Heart left ventricle (tissue), 16 donors: ENCODE measurements at regions of chr13 and their contacts with region 1.

Region 1: DNA sequence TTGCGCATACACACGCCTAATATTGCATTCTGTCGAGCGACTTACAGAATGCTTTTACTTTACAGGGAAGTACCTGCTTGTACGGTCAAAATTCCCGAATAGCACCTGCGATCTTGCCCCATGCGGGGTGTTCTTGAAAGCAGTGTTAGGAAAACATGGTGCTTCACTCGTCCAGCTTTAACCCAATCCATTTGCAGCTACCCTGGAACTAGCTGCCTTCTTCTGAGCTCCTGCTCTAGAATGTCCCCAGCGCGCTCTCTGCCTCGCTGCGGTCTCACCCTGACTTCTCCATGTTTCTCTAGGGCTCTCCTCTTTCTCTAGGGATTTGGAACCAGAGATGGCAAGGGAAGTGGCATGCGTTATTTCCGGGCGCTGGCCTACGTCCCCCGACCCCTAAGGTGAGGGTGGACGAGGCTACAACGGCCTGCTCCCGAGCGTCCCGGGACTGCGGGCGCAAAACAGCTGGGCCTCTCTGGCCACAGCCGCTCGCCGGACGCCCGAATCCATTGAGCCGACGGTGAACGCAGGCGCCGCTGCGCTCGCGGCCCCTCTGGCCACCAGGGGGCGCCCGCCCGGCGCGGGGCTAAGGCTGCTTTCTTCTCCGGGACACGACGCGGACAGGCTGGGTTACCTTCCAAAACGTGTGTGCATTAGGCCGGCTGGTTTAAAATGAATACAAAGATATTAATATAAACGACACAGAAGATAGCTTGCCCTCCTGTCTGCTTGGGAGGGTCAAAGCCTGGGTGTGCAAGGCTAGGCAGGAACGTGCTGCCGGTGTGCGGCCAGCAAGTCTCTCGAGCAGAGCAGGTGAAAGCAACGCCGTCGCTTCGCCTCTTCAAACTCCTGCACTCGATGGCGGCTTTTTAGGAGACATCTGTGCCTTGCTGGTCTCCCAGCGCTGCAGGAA is 1.8 kb upstream of the SPRY2 start:
- DNase-seq: peak; percentile 85 to 95 (median 90)
- ATAC-seq: peak; percentile 24 to 59 (median 51)
- H3K4me3 ChIP-seq: peak overlapping the region; percentile 69 to 97 (median 94)
- H3K27ac ChIP-seq: peak overlapping the region; percentile 89 to 100 (median 98)
- H3K4me1 ChIP-seq: peaks cover 0 to 30% (median 14%) of the 10 kb centered on the region in 12 donors
- H3K27me3 ChIP-seq: no peaks in the 10 kb centered on the region
- CTCF ChIP-seq: peak; percentile 96 to 100 (median 99)
- POLR2A ChIP-seq: peak in 1 of 2 donors; percentile 51

Region 2: GRCh38 chr13:79405829-79406596 is 936.7 kb before region 1 on chr13 and contains the start of gene RBM26:
- intact Hi-C with region 1: loop called in 1 of 10 experiments (anchors 5 kb)
- DNase-seq: peak; percentile 94 to 96 (median 95)
- ATAC-seq: peak; percentile 92 to 94 (median 94)
- H3K4me3 ChIP-seq: peak within 1 kb of the TSS; percentile 68 to 92 (median 84)
- H3K27ac ChIP-seq: peak within 1 kb of the TSS; percentile 90 to 98 (median 96)
- H3K4me1 ChIP-seq: peaks cover 3 to 53% (median 45%) of the 10 kb centered on the region in 12 donors
- H3K27me3 ChIP-seq: no peaks in the 10 kb centered on the region
- CTCF ChIP-seq: peak in 2 of 12 donors; percentile 7 to 18
- POLR2A ChIP-seq: peak in 1 of 2 donors; percentile 49
- total RNA-seq, gene RBM26: 16.9 to 28.4 (median 21.0) TPM

Region 3: GRCh38 chr13:79637133-79637763 is 705.5 kb before region 1 on chr13:
- intact Hi-C with region 1: loop called in 2 of 10 experiments (anchors 2 to 5 kb)
- DNase-seq: peak; percentile 75 to 88 (median 83)
- ATAC-seq: peak; percentile 96 to 98 (median 97)
- H3K4me3 ChIP-seq: peak overlapping the region in 10 of 12 donors; percentile 1 to 46 (median 35)
- H3K27ac ChIP-seq: peak overlapping the region; percentile 22 to 84 (median 64)
- H3K4me1 ChIP-seq: peaks cover 0 to 22% (median 2%) of the 10 kb centered on the region in 12 donors
- H3K27me3 ChIP-seq: no peaks in the 10 kb centered on the region
- CTCF ChIP-seq: no peak
- POLR2A ChIP-seq: no peak

Region 4: DNA sequence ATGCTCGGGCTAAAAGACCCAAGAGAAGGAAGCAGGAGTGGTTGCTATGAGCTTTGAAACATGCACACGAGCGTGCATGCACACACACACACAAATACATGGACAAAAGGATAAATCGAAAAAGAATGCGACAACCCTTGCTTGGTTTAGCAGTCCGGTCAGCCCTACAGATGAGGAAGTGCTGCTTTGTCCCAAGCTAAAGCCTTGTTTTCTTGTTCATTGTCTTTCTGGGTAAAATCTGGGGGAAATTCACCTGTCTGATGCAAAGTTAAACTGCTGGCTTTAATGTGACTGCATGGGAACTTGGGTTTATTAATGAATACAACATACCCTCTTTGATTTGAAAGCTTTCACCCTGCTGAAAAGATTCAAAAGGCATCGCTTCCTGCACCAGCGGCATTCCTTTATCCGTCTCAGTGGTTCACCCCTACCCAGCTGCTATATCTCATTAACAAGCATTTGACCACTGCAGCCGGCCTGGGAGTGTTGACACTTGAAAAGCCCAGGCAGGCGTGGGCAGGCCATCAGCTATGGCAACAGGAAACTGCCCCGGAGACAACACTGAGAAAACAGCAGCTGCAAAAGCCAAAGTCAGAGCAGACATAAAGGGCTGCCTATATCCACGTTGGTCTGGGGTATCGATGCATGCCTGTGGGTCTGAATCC is 560.1 kb before region 1 on chr13:
- intact Hi-C with region 1: loop called in 7 of 10 experiments (anchors 5 to 10 kb)
- DNase-seq: peak; percentile 62 to 88 (median 73)
- ATAC-seq: peak; percentile 96 to 99 (median 98)
- H3K4me3 ChIP-seq: peak overlapping the region in 2 of 12 donors; percentile 12 to 15
- H3K27ac ChIP-seq: peak overlapping the region in 7 of 12 donors; percentile 9 to 47 (median 25)
- H3K4me1 ChIP-seq: peaks cover 0 to 29% (median 9%) of the 10 kb centered on the region in 12 donors
- H3K27me3 ChIP-seq: no peaks in the 10 kb centered on the region
- CTCF ChIP-seq: no peak
- POLR2A ChIP-seq: no peak

Region 5: DNA sequence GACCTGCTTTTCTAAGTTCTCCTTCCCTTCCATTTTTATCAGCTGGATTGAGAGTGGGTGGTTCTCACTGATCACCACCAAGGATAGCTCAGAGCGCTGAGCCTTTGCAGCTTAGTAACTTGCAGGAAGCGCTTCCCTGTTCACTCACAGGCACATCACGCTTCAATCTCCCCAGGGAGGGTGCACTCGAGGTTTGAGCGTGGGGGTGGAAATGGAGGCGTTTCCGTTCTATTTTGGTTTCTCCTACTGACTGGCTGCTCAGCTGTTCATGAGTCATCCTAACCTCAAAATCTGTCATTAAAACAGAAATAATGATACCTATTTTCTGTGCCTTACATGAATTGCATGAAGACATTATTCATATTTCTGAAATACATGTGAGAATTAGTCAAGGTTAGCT is 293.9 kb before region 1 on chr13:
- intact Hi-C with region 1: loop called in 6 of 10 experiments (anchors 2 to 5 kb)
- DNase-seq: peak; percentile 86 to 93 (median 90)
- ATAC-seq: peak; percentile 98 to 99 (median 98)
- H3K4me3 ChIP-seq: no peak overlapping the region
- H3K27ac ChIP-seq: peak overlapping the region in 11 of 12 donors; percentile 6 to 80 (median 45)
- H3K4me1 ChIP-seq: peaks cover 0 to 35% (median 28%) of the 10 kb centered on the region in 12 donors
- H3K27me3 ChIP-seq: no peaks in the 10 kb centered on the region
- CTCF ChIP-seq: no peak
- POLR2A ChIP-seq: no peak

Region 6: GRCh38 chr13:80235166-80235966 is 107.4 kb before region 1 on chr13:
- intact Hi-C with region 1: loop called in 1 of 10 experiments (anchors 5 kb)
- DNase-seq: no peak
- ATAC-seq: peak in 3 of 4 donors; percentile 32 to 34 (median 32)
- H3K4me3 ChIP-seq: peak overlapping the region in 6 of 12 donors; percentile 1 to 33 (median 17)
- H3K27ac ChIP-seq: peak overlapping the region in 6 of 12 donors; percentile 2 to 50 (median 20)
- H3K4me1 ChIP-seq: peaks cover 0 to 11% (median 7%) of the 10 kb centered on the region in 12 donors
- H3K27me3 ChIP-seq: no peaks in the 10 kb centered on the region
- CTCF ChIP-seq: no peak
- POLR2A ChIP-seq: no peak

Region 7: DNA sequence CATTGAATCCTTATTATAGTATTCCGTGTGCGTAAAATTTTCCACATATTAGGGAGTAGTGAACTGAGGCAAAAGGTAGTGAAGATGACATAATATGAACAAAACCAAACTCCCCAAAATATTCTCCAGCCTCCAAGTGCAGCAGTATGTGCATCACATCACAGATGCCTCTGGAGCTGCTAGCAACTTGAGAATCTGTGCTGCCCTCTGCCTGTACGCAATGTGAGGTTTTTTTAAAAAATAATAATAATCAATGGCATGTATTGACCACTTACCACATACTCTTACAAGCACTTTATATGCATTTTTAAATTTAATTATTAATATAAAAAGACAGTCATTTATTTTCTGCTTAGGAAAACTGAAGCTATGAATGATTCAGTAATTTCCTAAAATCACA is 581.2 kb after region 1 on chr13:
- intact Hi-C with region 1: loop called in 2 of 10 experiments (anchors 2 to 5 kb)
- DNase-seq: no peak
- ATAC-seq: peak in 3 of 4 donors; percentile 59 to 69 (median 61)
- H3K4me3 ChIP-seq: no peak overlapping the region
- H3K27ac ChIP-seq: peak overlapping the region in 9 of 12 donors; percentile 4 to 62 (median 46)
- H3K4me1 ChIP-seq: peaks cover 0 to 14% (median 1%) of the 10 kb centered on the region in 12 donors
- H3K27me3 ChIP-seq: no peaks in the 10 kb centered on the region
- CTCF ChIP-seq: peak in 9 of 12 donors; percentile 11 to 47 (median 32)
- POLR2A ChIP-seq: no peak